ENCODE measurements at regions of chr5 and their contacts with region 1.

Region 1: DNA sequence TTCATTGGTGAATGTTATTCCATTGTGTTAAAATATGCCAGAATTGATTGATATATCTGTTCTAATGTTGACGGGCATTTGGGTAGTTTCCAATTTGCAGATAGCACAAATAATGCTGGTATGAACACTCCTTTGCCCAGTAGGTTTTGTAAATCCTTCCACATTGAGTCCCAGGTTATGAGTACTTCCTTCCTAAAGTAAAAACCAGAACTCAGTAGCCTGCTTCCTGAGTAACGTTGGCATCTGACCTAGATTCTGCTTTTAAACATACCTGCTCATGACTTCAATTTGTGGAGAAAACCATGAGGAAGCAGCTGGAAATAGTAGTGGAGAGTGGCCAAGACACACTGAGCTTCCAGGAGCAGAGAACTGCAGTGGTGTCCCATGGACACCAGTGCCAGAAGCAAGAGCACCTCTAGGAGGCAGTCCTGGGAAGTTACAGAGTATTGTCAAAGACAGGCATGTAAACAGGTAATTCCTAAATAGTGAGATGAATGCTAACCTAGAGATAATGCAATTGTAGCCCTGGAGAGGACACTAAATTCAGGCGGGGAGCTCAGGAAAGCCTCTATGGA is 24.3 kb upstream of the RASGRF2 start:
- DNase-seq: no peak
- H3K4me3 ChIP-seq: no peak overlapping the region
- H3K27ac ChIP-seq: no peak overlapping the region
- H3K4me1 ChIP-seq: no peaks in the 10 kb centered on the region
- H3K27me3 ChIP-seq: no peaks in the 10 kb centered on the region
- CTCF ChIP-seq: peak; percentile 55 to 70 (median 61)
- EP300 ChIP-seq: no peak
- POLR2A ChIP-seq: no peak
- RAD21 ChIP-seq: peak; percentile 74 to 79

Region 2: GRCh38 chr5:80951366-80951765 is 15.5 kb after region 1 on chr5:
- CTCF ChIA-PET with region 1: interaction called, 29 read pairs
- POLR2A ChIA-PET with region 1: interaction called, 3 read pairs
- DNase-seq: no peak
- H3K4me3 ChIP-seq: no peak overlapping the region
- H3K27ac ChIP-seq: no peak overlapping the region
- H3K4me1 ChIP-seq: peaks cover 0 to 7% (median 5%) of the 10 kb centered on the region in 4 experiments; a peak in 4 of 7 replicates
- H3K27me3 ChIP-seq: no peaks in the 10 kb centered on the region
- CTCF ChIP-seq: no peak
- EP300 ChIP-seq: no peak
- POLR2A ChIP-seq: no peak
- RAD21 ChIP-seq: no peak